ENCODE measurements at regions of chr11 and their contacts with region 1.

Region 1: DNA sequence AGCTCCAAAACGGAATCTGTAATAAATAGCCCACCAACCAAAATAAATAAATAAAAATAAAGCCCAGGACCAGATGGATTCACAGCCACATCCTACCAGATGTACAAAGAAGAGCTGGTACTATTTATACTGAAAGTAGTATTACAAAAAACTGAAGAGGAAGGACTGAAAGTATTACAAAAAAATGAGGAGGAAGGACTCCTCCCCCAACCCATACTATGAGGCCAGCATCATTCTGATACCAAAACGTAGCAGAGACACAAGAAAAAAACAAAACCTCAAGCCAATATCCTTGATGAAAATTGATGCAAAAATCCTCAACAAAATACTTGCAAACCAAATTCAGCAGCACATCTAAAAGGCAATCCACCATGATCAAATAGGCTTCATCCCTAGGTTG is 65.4 kb downstream of the CYP2R1 start:
- DNase-seq: no peak
- ATAC-seq: no peak
- H3K4me3 ChIP-seq: no peak overlapping the region
- H3K4me3 Mint-ChIP-seq: no peak overlapping the region
- H3K27ac ChIP-seq: no peak overlapping the region
- H3K27ac Mint-ChIP-seq: peak overlapping the region; percentile 76
- H3K4me1 ChIP-seq: no peaks in the 10 kb centered on the region
- H3K4me1 Mint-ChIP-seq: peaks cover 11% of the 10 kb centered on the region
- H3K27me3 ChIP-seq: no peaks in the 10 kb centered on the region
- H3K27me3 Mint-ChIP-seq: no peaks in the 10 kb centered on the region
- CTCF ChIP-seq: no peak

Region 2: GRCh38 chr11:14812757-14813156 is 13.8 kb before region 1 on chr11:
- CTCF ChIA-PET with region 1: interaction called, 3 read pairs
- POLR2A ChIA-PET with region 1: interaction called, 4 read pairs
- intact Hi-C with region 1: loop called in 1 of 2 experiments (anchors 1 kb)
- DNase-seq: no peak
- ATAC-seq: no peak
- H3K4me3 ChIP-seq: no peak overlapping the region
- H3K4me3 Mint-ChIP-seq: no peak overlapping the region
- H3K27ac ChIP-seq: no peak overlapping the region
- H3K27ac Mint-ChIP-seq: no peak overlapping the region
- H3K4me1 ChIP-seq: no peaks in the 10 kb centered on the region
- H3K4me1 Mint-ChIP-seq: peaks cover 3% of the 10 kb centered on the region
- H3K27me3 ChIP-seq: no peaks in the 10 kb centered on the region
- H3K27me3 Mint-ChIP-seq: no peaks in the 10 kb centered on the region
- CTCF ChIP-seq: no peak

Region 3: GRCh38 chr11:14858404-14858803 is 31.8 kb after region 1 on chr11:
- CTCF ChIA-PET with region 1: no interaction called
- POLR2A ChIA-PET with region 1: no interaction called
- intact Hi-C with region 1: no loop called
- DNase-seq: no peak
- ATAC-seq: no peak
- H3K4me3 ChIP-seq: no peak overlapping the region
- H3K4me3 Mint-ChIP-seq: no peak overlapping the region
- H3K27ac ChIP-seq: no peak overlapping the region
- H3K27ac Mint-ChIP-seq: peak overlapping the region; percentile 76
- H3K4me1 ChIP-seq: no peaks in the 10 kb centered on the region
- H3K4me1 Mint-ChIP-seq: peaks cover 24% of the 10 kb centered on the region
- H3K27me3 ChIP-seq: no peaks in the 10 kb centered on the region
- H3K27me3 Mint-ChIP-seq: no peaks in the 10 kb centered on the region
- CTCF ChIP-seq: no peak

Region 4: GRCh38 chr11:14942745-14943144 is 116.1 kb after region 1 on chr11:
- CTCF ChIA-PET with region 1: no interaction called
- POLR2A ChIA-PET with region 1: no interaction called
- intact Hi-C with region 1: no loop called
- DNase-seq: no peak
- ATAC-seq: no peak
- H3K4me3 ChIP-seq: no peak overlapping the region
- H3K4me3 Mint-ChIP-seq: no peak overlapping the region
- H3K27ac ChIP-seq: no peak overlapping the region
- H3K27ac Mint-ChIP-seq: no peak overlapping the region
- H3K4me1 ChIP-seq: no peaks in the 10 kb centered on the region
- H3K4me1 Mint-ChIP-seq: no peaks in the 10 kb centered on the region
- H3K27me3 ChIP-seq: no peaks in the 10 kb centered on the region
- H3K27me3 Mint-ChIP-seq: peaks cover 2% of the 10 kb centered on the region
- CTCF ChIP-seq: no peak

Region 5: GRCh38 chr11:15011776-15012175 is 185.2 kb after region 1 on chr11:
- CTCF ChIA-PET with region 1: no interaction called
- POLR2A ChIA-PET with region 1: no interaction called
- intact Hi-C with region 1: no loop called
- DNase-seq: no peak
- ATAC-seq: no peak
- H3K4me3 ChIP-seq: no peak overlapping the region
- H3K4me3 Mint-ChIP-seq: no peak overlapping the region
- H3K27ac ChIP-seq: no peak overlapping the region
- H3K27ac Mint-ChIP-seq: no peak overlapping the region
- H3K4me1 ChIP-seq: no peaks in the 10 kb centered on the region
- H3K4me1 Mint-ChIP-seq: no peaks in the 10 kb centered on the region
- H3K27me3 ChIP-seq: no peaks in the 10 kb centered on the region
- H3K27me3 Mint-ChIP-seq: peaks cover 31% of the 10 kb centered on the region
- CTCF ChIP-seq: no peak

Region 6: DNA sequence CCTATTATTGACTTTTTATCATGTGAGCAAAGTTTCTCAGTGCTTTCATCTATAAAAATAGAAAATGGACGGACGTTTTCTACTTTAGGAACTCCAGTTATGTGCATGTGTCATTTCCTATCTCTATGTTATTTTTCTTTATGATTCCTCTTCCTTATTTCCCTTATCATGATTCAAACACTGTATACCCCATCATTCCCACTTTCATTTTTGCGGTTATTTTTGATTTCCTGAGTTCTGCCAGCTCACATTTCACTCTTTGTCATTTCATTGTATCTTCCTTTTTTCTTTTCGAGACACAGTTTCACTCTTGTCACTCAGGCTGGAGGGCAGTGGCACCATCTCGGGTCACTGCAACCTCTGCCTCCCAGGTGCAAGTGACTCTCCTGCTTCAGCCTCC is 1933.3 kb after region 1 on chr11:
- CTCF ChIA-PET with region 1: no interaction called
- POLR2A ChIA-PET with region 1: no interaction called
- intact Hi-C with region 1: no loop called
- DNase-seq: no peak
- ATAC-seq: no peak
- H3K4me3 ChIP-seq: no peak overlapping the region
- H3K4me3 Mint-ChIP-seq: no peak overlapping the region
- H3K27ac ChIP-seq: no peak overlapping the region
- H3K27ac Mint-ChIP-seq: peak overlapping the region; percentile 73
- H3K4me1 ChIP-seq: no peaks in the 10 kb centered on the region
- H3K4me1 Mint-ChIP-seq: peaks cover 10% of the 10 kb centered on the region
- H3K27me3 ChIP-seq: no peaks in the 10 kb centered on the region
- H3K27me3 Mint-ChIP-seq: no peaks in the 10 kb centered on the region
- CTCF ChIP-seq: no peak